ENCODE measurements at regions of chr6 and their contacts with region 1.

Region 1: GRCh38 chr6:157764178-157765033 is 58.6 kb upstream of the SNX9 start:
- DNase-seq: peak; percentile 93
- H3K4me3 Mint-ChIP-seq: peak overlapping the region; percentile 52
- H3K27ac Mint-ChIP-seq: peak overlapping the region; percentile 89
- H3K4me1 Mint-ChIP-seq: peaks cover 78% of the 10 kb centered on the region
- H3K27me3 Mint-ChIP-seq: no peaks in the 10 kb centered on the region

Region 2: DNA sequence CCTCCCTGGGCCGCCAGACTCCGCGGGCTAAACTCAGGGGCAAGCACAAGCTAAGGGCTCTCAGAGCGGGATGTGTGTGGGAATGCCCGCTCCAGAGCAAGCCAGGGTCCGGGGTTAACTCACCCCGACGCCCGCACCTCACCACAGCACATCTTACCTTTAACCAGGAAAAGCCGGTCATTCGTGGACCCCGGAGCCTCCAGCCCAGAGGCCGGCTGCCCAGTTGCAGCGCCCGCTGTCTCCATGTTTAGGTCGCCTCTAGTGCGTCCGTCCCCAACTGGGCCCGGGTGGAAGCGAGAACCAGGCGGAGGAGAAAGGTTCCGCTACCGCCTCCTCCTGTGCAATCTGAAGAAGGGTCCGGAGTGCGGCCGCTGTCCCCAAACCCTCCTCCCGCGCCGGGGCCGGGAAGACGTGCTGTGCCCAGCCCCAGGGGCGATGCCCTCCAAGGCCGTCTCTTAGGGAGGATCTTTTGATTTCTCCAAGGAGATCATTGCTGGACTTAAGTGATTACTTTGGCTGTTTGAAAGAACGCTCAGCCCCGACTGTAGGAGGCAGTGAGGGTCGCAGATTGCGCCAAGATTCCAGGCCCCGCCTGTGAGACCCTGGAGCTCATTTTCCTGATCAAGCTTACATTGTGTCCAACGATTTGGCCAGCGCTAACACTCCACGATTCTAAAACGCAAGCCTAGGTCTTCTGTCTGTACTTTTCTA is 441.0 kb before region 1 on chr6 and contains the start of gene TMEM242:
- CTCF ChIA-PET with region 1: no interaction called
- POLR2A ChIA-PET with region 1: no interaction called
- intact Hi-C with region 1: loop called (anchors 10 kb)
- DNase-seq: peak; percentile 95
- H3K4me3 Mint-ChIP-seq: peak within 1 kb of the TSS; percentile 97
- H3K27ac Mint-ChIP-seq: peak within 1 kb of the TSS; percentile 86
- H3K4me1 Mint-ChIP-seq: peaks cover 35% of the 10 kb centered on the region
- H3K27me3 Mint-ChIP-seq: peaks cover 12% of the 10 kb centered on the region
- total RNA-seq, gene TMEM242: 8.1 to 8.6 TPM

Region 3: GRCh38 chr6:157800420-157801237 is 36.2 kb after region 1 on chr6:
- CTCF ChIA-PET with region 1: interaction called, 7 read pairs
- POLR2A ChIA-PET with region 1: interaction called, 17 read pairs
- intact Hi-C with region 1: loop called (anchors 1 kb)
- DNase-seq: peak; percentile 71
- H3K4me3 Mint-ChIP-seq: peak overlapping the region; percentile 30
- H3K27ac Mint-ChIP-seq: peak overlapping the region; percentile 72
- H3K4me1 Mint-ChIP-seq: peaks cover 60% of the 10 kb centered on the region
- H3K27me3 Mint-ChIP-seq: peaks cover 13% of the 10 kb centered on the region

Region 4: DNA sequence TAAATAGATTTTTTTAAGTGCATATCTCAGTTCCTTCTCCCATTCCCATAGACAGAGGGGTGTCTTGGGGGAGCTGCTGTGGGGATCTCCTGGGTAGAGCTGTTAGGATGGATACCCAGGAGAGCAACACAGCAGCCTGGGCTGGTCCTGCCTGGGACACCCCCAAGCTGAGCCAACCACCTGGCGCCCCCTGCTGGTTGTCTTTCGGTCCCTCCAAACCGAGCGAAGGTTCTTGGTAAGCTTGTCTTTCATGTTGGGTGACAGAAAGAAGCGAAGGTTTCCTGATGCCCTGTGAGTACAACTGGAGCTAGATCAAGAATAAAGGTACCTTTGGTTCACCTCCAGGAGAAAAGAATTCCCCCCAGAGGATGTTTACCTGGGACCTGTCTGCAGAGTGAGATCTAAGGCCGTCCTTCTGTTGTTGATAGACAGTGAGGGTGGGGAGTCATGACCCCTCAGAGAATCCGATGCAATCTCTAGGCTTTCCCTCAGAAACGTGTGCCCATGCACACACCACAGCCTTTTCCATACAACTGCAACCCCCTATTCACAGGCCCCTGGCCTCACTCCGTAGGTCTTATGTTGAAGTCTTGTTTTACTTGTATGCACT is 109.4 kb after region 1 on chr6:
- CTCF ChIA-PET with region 1: interaction called, 172 read pairs
- POLR2A ChIA-PET with region 1: interaction called, 6 read pairs
- intact Hi-C with region 1: no loop called
- DNase-seq: peak; percentile 92
- H3K4me3 Mint-ChIP-seq: no peak overlapping the region
- H3K27ac Mint-ChIP-seq: no peak overlapping the region
- H3K4me1 Mint-ChIP-seq: peaks cover 30% of the 10 kb centered on the region
- H3K27me3 Mint-ChIP-seq: no peaks in the 10 kb centered on the region

Region 5: GRCh38 chr6:158060455-158061360 is 296.3 kb after region 1 on chr6:
- CTCF ChIA-PET with region 1: no interaction called
- POLR2A ChIA-PET with region 1: no interaction called
- intact Hi-C with region 1: loop called (anchors 5 kb)
- DNase-seq: no peak
- H3K4me3 Mint-ChIP-seq: no peak overlapping the region
- H3K27ac Mint-ChIP-seq: no peak overlapping the region
- H3K4me1 Mint-ChIP-seq: peaks cover 31% of the 10 kb centered on the region
- H3K27me3 Mint-ChIP-seq: no peaks in the 10 kb centered on the region

Region 6: DNA sequence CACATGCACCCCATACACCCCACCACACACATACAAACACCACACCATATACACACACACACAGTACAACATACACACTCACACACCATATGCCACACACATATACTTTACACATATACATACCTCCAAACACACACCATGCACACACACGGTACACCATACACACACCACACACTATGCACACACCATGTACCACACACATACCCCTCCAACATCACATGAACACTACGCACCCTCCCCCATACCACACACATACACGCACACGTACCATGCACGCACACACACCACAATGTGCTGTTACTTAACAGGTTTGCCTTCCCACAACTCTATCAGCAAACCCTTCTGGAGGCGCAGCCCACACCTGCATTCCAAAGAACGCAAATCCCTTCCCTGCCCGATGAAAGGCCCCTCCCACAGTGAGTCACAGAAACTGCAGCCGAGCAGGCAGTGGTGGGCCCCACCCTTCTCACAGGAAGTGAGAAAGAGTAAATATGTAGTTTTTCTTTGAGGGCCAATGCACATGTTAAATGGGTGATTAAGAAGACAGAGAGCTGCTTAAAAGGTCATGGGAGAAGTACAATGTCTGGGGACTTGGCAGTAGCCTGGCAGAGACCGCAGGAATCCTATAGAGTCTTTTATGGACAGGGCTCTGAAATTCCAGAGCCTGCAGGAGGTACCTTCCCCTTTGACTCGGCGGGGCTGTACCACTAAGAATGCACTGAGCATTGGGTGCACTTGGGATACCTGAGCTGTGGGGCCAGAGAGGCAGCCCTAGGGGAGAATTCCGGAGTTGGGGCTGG is 1088.9 kb after region 1 on chr6:
- CTCF ChIA-PET with region 1: no interaction called
- POLR2A ChIA-PET with region 1: no interaction called
- intact Hi-C with region 1: loop called (anchors 5 kb)
- DNase-seq: peak; percentile 94
- H3K4me3 Mint-ChIP-seq: no peak overlapping the region
- H3K27ac Mint-ChIP-seq: no peak overlapping the region
- H3K4me1 Mint-ChIP-seq: peaks cover 28% of the 10 kb centered on the region
- H3K27me3 Mint-ChIP-seq: no peaks in the 10 kb centered on the region